GM12878 (cell line): ENCODE measurements at regions of chr1 and their contacts with region 1.

Region 1: DNA sequence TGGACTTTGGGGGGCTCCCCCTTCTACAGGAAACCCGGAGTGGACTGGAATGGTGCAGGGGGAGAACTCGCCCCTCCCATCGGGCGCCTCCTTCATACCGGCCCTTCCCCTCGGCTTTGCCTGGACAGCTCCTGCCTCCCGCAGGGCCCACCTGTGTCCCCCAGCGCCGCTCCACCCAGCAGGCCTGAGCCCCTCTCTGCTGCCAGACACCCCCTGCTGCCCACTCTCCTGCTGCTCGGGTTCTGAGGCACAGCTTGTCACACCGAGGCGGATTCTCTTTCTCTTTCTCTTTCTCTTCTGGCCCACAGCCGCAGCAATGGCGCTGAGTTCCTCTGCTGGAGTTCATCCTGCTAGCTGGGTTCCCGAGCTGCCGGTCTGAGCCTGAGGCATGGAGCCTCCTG is at the start of gene TNFRSF14:
- DNase-seq: no peak
- ATAC-seq: peak; percentile 73
- H3K4me3 ChIP-seq: peak within 1 kb of the TSS; percentile 87
- H3K27ac ChIP-seq: peak within 1 kb of the TSS; percentile 99
- H3K4me1 ChIP-seq: peaks cover 25% of the 10 kb centered on the region
- H3K27me3 ChIP-seq: no peaks in the 10 kb centered on the region
- CTCF ChIP-seq: peak in 2 of 3 experiments; percentile 12 to 13; a peak in 2 of 6 replicates
- EP300 ChIP-seq: no peak; a peak in 1 of 4 replicates
- POLR2A ChIP-seq: peak; percentile 77
- RAD21 ChIP-seq: no peak
- polyA plus RNA-seq, gene TNFRSF14: 0.43 to 2.9 TPM

Region 2: DNA sequence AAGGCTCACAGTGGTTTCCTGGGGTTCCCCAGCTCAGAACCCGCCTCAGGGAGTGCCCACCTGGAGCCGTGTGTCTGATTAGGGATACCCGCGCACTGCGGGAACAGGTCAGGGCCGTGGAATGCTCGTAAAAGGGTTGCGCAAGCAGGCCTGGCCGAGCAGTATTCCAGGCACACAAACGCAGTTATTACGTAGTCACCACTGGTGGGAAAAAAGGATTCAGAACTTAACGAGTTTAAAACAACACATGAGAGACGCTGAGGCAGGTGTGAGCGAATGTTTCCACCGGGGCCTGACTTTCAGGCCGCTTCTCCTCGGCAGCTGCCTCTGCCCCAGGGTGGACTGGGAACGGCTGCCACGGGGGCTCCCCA is 62.0 kb before region 1 on chr1:
- CTCF ChIA-PET with region 1: no interaction called
- POLR2A ChIA-PET with region 1: no interaction called
- RAD21 ChIA-PET with region 1: no interaction called
- SMC1A ChIA-PET with region 1: no interaction called
- in situ Hi-C with region 1: no loop called
- intact Hi-C with region 1: no loop called
- DNase-seq: no peak
- ATAC-seq: no peak
- H3K4me3 ChIP-seq: no peak overlapping the region
- H3K27ac ChIP-seq: no peak overlapping the region
- H3K4me1 ChIP-seq: peaks cover 10% of the 10 kb centered on the region
- H3K27me3 ChIP-seq: no peaks in the 10 kb centered on the region
- CTCF ChIP-seq: no peak
- EP300 ChIP-seq: no peak
- POLR2A ChIP-seq: no peak
- RAD21 ChIP-seq: no peak

Region 3: GRCh38 chr1:2534687-2535441 is 21.4 kb before region 1 on chr1:
- CTCF ChIA-PET with region 1: no interaction called
- POLR2A ChIA-PET with region 1: no interaction called
- RAD21 ChIA-PET with region 1: no interaction called
- SMC1A ChIA-PET with region 1: no interaction called
- in situ Hi-C with region 1: no loop called
- intact Hi-C with region 1: no loop called
- DNase-seq: no peak
- ATAC-seq: no peak
- H3K4me3 ChIP-seq: no peak overlapping the region
- H3K27ac ChIP-seq: no peak overlapping the region
- H3K4me1 ChIP-seq: no peaks in the 10 kb centered on the region
- H3K27me3 ChIP-seq: peaks cover 6 to 14% of the 10 kb centered on the region in 2 experiments
- CTCF ChIP-seq: no peak
- EP300 ChIP-seq: no peak
- POLR2A ChIP-seq: no peak
- RAD21 ChIP-seq: no peak

Region 4: GRCh38 chr1:2575801-2576663 is 19.8 kb after region 1 on chr1:
- CTCF ChIA-PET with region 1: interaction called, 54 read pairs
- POLR2A ChIA-PET with region 1: interaction called, 60 read pairs
- RAD21 ChIA-PET with region 1: interaction called, 39 read pairs
- SMC1A ChIA-PET with region 1: interaction called, 28 read pairs
- in situ Hi-C with region 1: no loop called
- intact Hi-C with region 1: loop called (anchors 1 kb)
- DNase-seq: no peak
- ATAC-seq: no peak; the same call in 2 of the 3 replicates
- H3K4me3 ChIP-seq: peak overlapping the region; percentile 59; the same call in 1 of the 2 replicates
- H3K27ac ChIP-seq: peak overlapping the region; percentile 99
- H3K4me1 ChIP-seq: peaks cover 46% of the 10 kb centered on the region
- H3K27me3 ChIP-seq: no peaks in the 10 kb centered on the region
- CTCF ChIP-seq: no peak
- EP300 ChIP-seq: no peak
- POLR2A ChIP-seq: no peak; the same call in 1 of the 2 replicates
- RAD21 ChIP-seq: no peak

Region 5: GRCh38 chr1:2786329-2787162 is 230.3 kb after region 1 on chr1:
- CTCF ChIA-PET with region 1: interaction called, 10 read pairs
- POLR2A ChIA-PET with region 1: no interaction called
- RAD21 ChIA-PET with region 1: interaction called, 4 read pairs
- SMC1A ChIA-PET with region 1: no interaction called
- in situ Hi-C with region 1: no loop called
- intact Hi-C with region 1: no loop called
- DNase-seq: no peak
- ATAC-seq: peak; percentile 75
- H3K4me3 ChIP-seq: no peak overlapping the region
- H3K27ac ChIP-seq: no peak overlapping the region
- H3K4me1 ChIP-seq: no peaks in the 10 kb centered on the region
- H3K27me3 ChIP-seq: no peaks in the 10 kb centered on the region
- CTCF ChIP-seq: peak; percentile 64 to 80 (median 72)
- EP300 ChIP-seq: no peak
- POLR2A ChIP-seq: no peak
- RAD21 ChIP-seq: peak; percentile 62

Region 6: GRCh38 chr1:3423245-3423829 is 867.1 kb after region 1 on chr1:
- CTCF ChIA-PET with region 1: no interaction called
- POLR2A ChIA-PET with region 1: no interaction called
- RAD21 ChIA-PET with region 1: no interaction called
- SMC1A ChIA-PET with region 1: no interaction called
- in situ Hi-C with region 1: no loop called
- intact Hi-C with region 1: loop called (anchors 5 kb)
- DNase-seq: no peak
- ATAC-seq: no peak
- H3K4me3 ChIP-seq: no peak overlapping the region
- H3K27ac ChIP-seq: no peak overlapping the region
- H3K4me1 ChIP-seq: no peaks in the 10 kb centered on the region
- H3K27me3 ChIP-seq: no peaks in the 10 kb centered on the region; a peak in 2 of 4 replicates
- CTCF ChIP-seq: no peak
- EP300 ChIP-seq: no peak
- POLR2A ChIP-seq: no peak
- RAD21 ChIP-seq: no peak